Tibial artery (tissue), 4 donors: ENCODE measurements at regions of chr1 and their contacts with region 1.

Region 1: DNA sequence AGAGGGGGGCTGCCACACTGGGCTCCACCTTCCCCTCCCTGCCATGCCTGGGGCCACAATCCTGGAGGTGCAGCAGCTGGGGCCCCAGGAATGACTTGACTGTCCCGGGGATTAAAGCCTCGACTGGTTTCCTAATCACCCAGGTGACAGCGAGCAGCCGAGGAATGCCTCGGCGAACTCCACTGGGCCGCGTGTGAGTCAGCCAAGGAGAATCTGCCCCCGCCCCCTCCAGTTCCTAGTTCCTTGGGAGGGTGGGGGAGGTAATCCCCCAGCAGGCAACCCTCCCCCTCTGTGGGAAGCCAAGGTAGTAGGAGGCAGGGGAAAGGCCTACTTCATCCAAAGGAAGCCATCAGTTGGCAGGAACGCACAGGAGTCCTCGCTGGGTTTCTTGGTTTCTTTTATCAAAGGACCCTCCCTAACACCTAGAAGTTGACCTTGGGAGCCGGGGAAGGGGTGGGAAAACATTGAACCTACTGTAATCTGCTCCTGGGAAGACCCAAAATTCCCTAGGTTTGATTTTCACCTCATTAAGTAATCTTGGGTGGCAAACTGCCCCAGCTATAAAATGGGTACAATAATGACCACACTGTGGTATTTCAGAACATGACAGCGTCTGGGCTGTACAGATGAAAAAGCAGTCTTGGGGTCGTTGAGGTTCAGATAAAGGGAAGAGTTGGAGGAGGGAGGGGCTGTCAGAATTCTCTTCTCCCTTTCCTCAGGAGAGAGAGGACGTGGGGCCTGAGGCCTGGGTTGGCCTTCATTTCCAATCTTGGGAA is 1.5 kb downstream of the TENT5B start:
- DNase-seq: peak; percentile 53 to 89
- H3K4me3 ChIP-seq: peak overlapping the region; percentile 81 to 99
- H3K27ac ChIP-seq: peak overlapping the region; percentile 91 to 99
- H3K4me1 ChIP-seq: peaks cover 0 to 55% (median 41%) of the 10 kb centered on the region in 4 donors
- H3K27me3 ChIP-seq: no peaks in the 10 kb centered on the region
- CTCF ChIP-seq: no peak

Region 2: GRCh38 chr1:26999440-26999987 is 11.7 kb before region 1 on chr1:
- intact Hi-C with region 1: loop called (anchors 1 kb)
- DNase-seq: peak; percentile 84 to 96
- H3K4me3 ChIP-seq: no peak overlapping the region
- H3K27ac ChIP-seq: peak overlapping the region; percentile 89 to 90
- H3K4me1 ChIP-seq: peaks cover 0 to 96% (median 77%) of the 10 kb centered on the region in 4 donors
- H3K27me3 ChIP-seq: no peaks in the 10 kb centered on the region
- CTCF ChIP-seq: peak in 1 of 2 experiments; percentile 11

Region 3: GRCh38 chr1:27031235-27032118 is 20.3 kb after region 1 on chr1:
- intact Hi-C with region 1: loop called (anchors 2 kb)
- DNase-seq: peak; percentile 76 to 95
- H3K4me3 ChIP-seq: peak overlapping the region; percentile 36 to 52
- H3K27ac ChIP-seq: peak overlapping the region; percentile 85 to 86
- H3K4me1 ChIP-seq: peaks cover 0 to 36% (median 30%) of the 10 kb centered on the region in 4 donors
- H3K27me3 ChIP-seq: no peaks in the 10 kb centered on the region
- CTCF ChIP-seq: no peak